Sigmoid colon (tissue), 7 donors: ENCODE measurements at regions of chr19 and their contacts with region 1.

Region 1: GRCh38 chr19:52897144-52897935 is at the start of gene ZNF320:
- DNase-seq: peak; percentile 98
- H3K4me3 ChIP-seq: peak within 1 kb of the TSS; percentile 61 to 81 (median 72)
- H3K27ac ChIP-seq: peak within 1 kb of the TSS; percentile 87 to 96 (median 92)
- H3K4me1 ChIP-seq: peaks cover 0 to 19% (median 17%) of the 10 kb centered on the region in 4 donors
- H3K27me3 ChIP-seq: no peaks in the 10 kb centered on the region
- CTCF ChIP-seq: no peak
- EP300 ChIP-seq: no peak
- POLR2A ChIP-seq: peak; percentile 33 to 73
- total RNA-seq, gene ZNF320: 9.0 to 21.8 (median 15.0) TPM

Region 2: DNA sequence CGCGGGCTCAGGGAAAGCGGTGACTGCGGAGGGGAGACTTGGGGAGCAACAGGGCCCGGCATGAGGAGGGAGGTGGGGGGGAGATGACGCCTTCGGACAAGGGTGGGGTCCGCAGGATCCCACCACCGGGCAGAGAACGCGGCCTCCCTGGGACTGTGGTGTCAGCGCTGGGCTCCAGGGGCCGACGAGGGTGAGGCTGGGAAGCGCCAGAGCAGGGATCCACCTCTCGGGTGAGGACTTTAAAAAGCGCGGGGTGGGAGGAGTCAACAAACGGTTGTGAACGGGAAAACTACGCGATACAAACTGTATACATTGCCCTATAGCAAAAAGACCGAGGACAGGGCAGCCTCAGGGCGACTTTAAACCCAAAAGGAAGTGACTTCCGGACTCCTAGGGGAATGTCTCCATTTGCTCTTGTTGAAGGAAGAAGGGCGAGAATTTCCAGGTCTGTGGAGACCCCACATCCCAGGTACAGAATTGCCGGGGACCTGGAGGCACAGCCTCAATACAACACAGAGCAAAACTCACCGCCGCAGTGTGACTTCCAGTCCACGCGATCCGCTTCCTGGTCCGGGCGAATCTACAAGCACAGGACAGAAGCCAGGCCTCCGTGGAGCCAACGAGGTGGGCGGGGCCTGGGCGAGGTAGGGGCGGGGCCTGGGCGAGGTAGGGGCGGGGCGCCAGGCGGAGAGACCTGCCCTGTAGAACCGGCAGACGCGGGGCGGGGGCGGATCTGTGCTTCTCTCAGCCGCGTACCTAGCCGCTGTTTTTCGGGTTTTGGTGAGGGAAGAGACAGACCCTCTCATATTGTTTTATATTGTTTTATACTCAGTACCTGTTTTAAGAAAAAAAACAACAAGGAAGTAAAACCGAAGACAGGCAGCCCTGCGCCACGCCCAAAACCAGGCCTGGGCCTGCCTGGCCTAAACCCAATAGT is 25.8 kb after region 1 on chr19 and contains the start of gene ZNF888:
- intact Hi-C with region 1: loop called (anchors 2 kb)
- DNase-seq: peak; percentile 94
- H3K4me3 ChIP-seq: peak within 1 kb of the TSS; percentile 53 to 71 (median 60)
- H3K27ac ChIP-seq: peak within 1 kb of the TSS; percentile 79 to 91 (median 86)
- H3K4me1 ChIP-seq: peaks cover 0 to 17% (median 7%) of the 10 kb centered on the region in 4 donors
- H3K27me3 ChIP-seq: no peaks in the 10 kb centered on the region
- CTCF ChIP-seq: no peak
- EP300 ChIP-seq: no peak
- POLR2A ChIP-seq: peak in 1 of 2 donors; percentile 61
- total RNA-seq, gene ZNF888: 1.8 to 3.9 (median 3.6) TPM

Region 3: DNA sequence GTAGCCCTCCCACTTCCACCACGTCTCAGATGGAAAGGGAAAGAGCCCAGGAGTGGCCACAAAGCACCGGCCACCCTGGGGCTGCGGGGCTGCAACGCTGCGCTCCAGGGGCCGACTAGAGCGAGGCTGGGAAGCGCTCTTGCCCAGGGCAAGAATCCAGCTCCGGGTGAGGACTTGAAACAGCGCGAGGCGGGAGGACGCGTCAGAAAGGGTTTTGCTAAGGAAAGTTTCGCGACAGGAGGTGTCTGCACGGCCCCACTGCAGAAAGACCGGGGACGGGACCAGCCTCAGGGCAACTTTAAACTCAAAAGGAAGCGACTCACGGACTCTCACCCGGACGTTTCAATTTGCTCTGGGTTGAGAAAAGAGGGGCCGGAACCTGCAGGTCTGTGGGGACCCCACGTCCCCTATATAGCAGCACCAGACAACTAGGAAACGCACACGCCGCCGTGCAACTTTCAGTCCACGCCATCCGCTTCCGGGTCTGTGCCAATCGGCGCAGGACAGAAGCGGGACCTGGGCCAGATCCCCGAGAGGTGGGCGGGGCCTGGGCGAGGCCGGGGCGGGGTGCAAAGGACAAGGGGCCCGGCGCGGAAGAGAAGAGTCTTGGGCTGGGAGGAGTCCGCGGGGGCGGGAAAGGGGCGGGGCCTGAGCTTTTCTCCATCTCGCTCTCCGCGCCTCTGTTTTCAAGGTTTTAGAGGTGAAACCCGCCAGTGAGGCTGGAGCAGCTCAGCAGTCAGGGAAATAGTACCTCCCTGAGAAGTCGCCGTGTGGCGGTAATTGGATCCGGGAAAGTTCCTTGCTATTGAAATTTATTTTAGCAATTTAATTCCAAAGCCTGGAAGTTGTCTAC is 65.3 kb after region 1 on chr19 and contains the start of gene ZNF816:
- intact Hi-C with region 1: loop called (anchors 1 kb)
- DNase-seq: peak; percentile 99
- H3K4me3 ChIP-seq: peak within 1 kb of the TSS; percentile 52 to 73 (median 62)
- H3K27ac ChIP-seq: peak within 1 kb of the TSS; percentile 85 to 87 (median 86)
- H3K4me1 ChIP-seq: peaks cover 0 to 18% (median 12%) of the 10 kb centered on the region in 4 donors
- H3K27me3 ChIP-seq: no peaks in the 10 kb centered on the region
- CTCF ChIP-seq: no peak
- EP300 ChIP-seq: no peak
- POLR2A ChIP-seq: peak in 1 of 2 donors; percentile 52
- total RNA-seq, gene ZNF816: 3.6 to 8.4 (median 6.1) TPM

Region 4: DNA sequence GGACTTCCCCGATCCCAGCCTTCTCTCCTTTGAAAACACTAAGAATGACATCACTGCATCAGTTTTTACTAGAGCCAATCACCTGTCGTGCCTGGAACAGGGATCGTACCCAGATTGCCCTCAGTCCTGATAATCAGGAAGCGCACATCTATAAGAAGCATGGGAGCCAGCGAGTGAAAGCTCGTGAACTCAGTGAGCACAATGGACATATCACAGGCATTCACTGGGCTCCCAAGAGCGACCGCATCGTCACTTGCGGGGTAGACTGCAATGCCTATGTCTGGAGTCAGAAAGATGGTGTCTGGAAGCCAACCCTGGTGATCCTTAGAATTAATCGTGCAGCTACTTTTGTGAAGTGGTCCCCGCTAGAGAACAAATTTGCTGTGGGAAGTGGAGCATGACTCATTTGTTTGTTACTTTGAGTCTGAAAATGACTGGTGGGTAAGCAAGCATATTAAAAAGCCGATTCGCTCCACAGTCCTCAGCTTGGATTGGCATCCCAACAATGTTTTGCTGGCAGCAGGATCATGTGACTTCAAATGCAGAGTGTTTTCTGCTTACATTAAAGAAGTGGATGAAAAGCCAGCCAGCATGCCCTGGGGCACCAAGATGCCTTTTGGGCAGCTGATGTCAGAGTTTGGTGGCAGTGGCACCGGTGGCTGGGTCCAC is 106.8 kb after region 1 on chr19:
- intact Hi-C with region 1: no loop called
- DNase-seq: no peak
- H3K4me3 ChIP-seq: no peak overlapping the region
- H3K27ac ChIP-seq: no peak overlapping the region
- H3K4me1 ChIP-seq: no peaks in the 10 kb centered on the region
- H3K27me3 ChIP-seq: no peaks in the 10 kb centered on the region
- CTCF ChIP-seq: no peak
- EP300 ChIP-seq: no peak
- POLR2A ChIP-seq: no peak